PC-3 (cell line): ENCODE measurements at regions of chr2 and their contacts with region 1.

Region 1: DNA sequence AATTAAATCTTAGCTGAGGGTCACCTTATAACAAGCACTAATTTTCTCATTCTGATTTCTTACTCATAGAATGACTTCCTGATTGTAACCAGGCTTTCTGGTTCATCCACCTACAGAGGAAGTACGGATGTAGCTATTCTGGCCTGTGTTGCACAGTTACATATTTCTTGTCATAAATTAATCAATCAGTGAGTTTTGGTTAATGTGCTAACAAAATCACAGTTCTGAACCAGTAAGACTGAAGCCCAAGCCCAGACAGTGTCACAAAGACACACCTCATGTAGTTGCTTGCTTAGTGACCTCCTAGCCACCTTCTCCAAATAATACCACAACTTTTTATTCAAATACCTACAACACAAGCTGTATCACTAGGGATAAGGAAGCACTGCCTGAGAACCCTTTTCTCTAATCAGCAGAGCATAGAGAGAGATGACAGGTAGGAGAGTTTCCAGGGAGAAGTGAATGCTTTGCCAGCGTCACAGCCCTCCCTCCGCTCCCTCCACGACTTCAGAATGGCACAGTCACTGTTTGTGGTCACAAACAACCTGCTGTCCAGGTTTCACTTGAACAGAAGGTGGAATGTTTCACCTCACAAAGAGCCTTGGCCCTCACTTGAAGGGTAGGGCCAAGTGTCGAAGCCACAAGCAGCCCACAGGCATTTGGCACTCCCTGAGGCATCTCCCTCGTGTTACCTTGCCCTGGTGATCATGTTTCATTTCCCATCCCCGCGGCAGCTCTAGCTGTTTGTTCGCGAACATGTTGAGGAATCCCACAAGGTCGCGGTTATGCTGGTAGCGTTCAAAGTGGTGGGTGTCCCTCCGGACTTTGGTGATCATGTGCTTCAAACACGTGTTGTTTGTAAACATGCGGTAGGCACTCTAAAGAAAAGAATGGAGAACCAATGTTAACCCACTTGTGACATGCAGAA is 120.8 kb upstream of the STK17B start:
- DNase-seq: peak; percentile 99
- ATAC-seq: peak; percentile 66
- H3K4me3 ChIP-seq: peak overlapping the region; percentile 49
- H3K27ac ChIP-seq: peak overlapping the region; percentile 98
- H3K4me1 ChIP-seq: peaks cover 54% of the 10 kb centered on the region
- H3K27me3 ChIP-seq: no peaks in the 10 kb centered on the region
- CTCF ChIP-seq: no peak

Region 2: GRCh38 chr2:196171248-196171871 is 120.8 kb before region 1 on chr2 and contains the start of gene STK17B:
- CTCF ChIA-PET with region 1: interaction called, 6 read pairs
- POLR2A ChIA-PET with region 1: interaction called, 5 read pairs
- intact Hi-C with region 1: loop called (anchors 1 kb)
- DNase-seq: peak; percentile 96
- ATAC-seq: peak; percentile 73
- H3K4me3 ChIP-seq: peak within 1 kb of the TSS; percentile 96
- H3K27ac ChIP-seq: peak within 1 kb of the TSS; percentile 49
- H3K4me1 ChIP-seq: peaks cover 28% of the 10 kb centered on the region
- H3K27me3 ChIP-seq: no peaks in the 10 kb centered on the region
- CTCF ChIP-seq: no peak
- total RNA-seq, gene STK17B: 21.3 and 22.1 TPM in 2 replicates

Region 3: GRCh38 chr2:196277002-196277401 is 15.1 kb before region 1 on chr2:
- CTCF ChIA-PET with region 1: interaction called, 3 read pairs
- POLR2A ChIA-PET with region 1: interaction called, 3 read pairs
- intact Hi-C with region 1: loop called (anchors 1 kb)
- DNase-seq: peak; percentile 59
- ATAC-seq: no peak
- H3K4me3 ChIP-seq: no peak overlapping the region
- H3K27ac ChIP-seq: no peak overlapping the region; the same call in 1 of the 2 replicates
- H3K4me1 ChIP-seq: peaks cover 30% of the 10 kb centered on the region
- H3K27me3 ChIP-seq: no peaks in the 10 kb centered on the region
- CTCF ChIP-seq: peak; percentile 86

Region 4: DNA sequence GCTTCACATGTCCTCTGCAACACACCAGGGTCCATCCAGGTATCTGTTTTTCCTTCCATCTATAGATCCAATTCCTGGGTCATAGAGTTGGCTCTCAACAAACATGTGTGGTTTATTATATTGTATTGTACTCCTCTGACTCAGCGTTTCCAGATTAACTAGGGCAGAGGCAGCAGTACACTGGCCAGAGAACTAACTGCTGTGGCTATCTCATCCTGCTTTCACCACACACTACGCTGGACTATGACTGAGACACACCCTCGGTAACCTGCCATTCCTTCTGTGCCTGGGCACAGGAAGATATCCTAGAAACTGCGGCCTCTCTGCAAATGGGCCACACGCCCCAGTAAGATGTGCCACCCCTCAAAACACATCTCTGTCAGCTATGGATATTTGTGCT is 39.0 kb after region 1 on chr2:
- CTCF ChIA-PET with region 1: no interaction called
- POLR2A ChIA-PET with region 1: no interaction called
- intact Hi-C with region 1: loop called (anchors 1 kb)
- DNase-seq: peak; percentile 95
- ATAC-seq: peak; percentile 77
- H3K4me3 ChIP-seq: peak overlapping the region; percentile 17; the same call in 1 of the 2 replicates
- H3K27ac ChIP-seq: peak overlapping the region; percentile 62
- H3K4me1 ChIP-seq: peaks cover 46% of the 10 kb centered on the region
- H3K27me3 ChIP-seq: no peaks in the 10 kb centered on the region
- CTCF ChIP-seq: no peak

Region 5: DNA sequence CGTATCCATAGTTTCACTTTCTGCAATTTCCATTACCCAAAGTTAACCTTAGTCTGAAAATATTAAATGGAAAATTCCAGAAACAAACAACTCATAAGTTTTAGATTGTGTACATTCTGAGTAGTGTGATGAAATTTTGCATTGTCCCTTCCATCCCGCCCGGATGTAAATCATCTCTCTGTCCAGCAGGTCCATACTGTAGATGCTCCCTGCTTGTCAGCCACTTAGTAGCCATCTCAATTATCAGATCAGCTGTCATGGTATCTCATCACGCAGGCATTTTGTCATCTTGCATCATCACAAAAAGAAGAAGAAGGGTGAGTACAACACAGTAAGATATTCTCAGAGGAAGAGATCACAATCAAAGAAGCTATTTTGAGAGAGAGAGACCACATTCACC is 64.2 kb after region 1 on chr2:
- CTCF ChIA-PET with region 1: no interaction called
- POLR2A ChIA-PET with region 1: no interaction called
- intact Hi-C with region 1: no loop called
- DNase-seq: no peak
- ATAC-seq: no peak
- H3K4me3 ChIP-seq: no peak overlapping the region
- H3K27ac ChIP-seq: no peak overlapping the region
- H3K4me1 ChIP-seq: no peaks in the 10 kb centered on the region
- H3K27me3 ChIP-seq: no peaks in the 10 kb centered on the region
- CTCF ChIP-seq: no peak